WTC11 (cell line): ENCODE measurements at regions of chr4 and their contacts with region 1.

Region 1: DNA sequence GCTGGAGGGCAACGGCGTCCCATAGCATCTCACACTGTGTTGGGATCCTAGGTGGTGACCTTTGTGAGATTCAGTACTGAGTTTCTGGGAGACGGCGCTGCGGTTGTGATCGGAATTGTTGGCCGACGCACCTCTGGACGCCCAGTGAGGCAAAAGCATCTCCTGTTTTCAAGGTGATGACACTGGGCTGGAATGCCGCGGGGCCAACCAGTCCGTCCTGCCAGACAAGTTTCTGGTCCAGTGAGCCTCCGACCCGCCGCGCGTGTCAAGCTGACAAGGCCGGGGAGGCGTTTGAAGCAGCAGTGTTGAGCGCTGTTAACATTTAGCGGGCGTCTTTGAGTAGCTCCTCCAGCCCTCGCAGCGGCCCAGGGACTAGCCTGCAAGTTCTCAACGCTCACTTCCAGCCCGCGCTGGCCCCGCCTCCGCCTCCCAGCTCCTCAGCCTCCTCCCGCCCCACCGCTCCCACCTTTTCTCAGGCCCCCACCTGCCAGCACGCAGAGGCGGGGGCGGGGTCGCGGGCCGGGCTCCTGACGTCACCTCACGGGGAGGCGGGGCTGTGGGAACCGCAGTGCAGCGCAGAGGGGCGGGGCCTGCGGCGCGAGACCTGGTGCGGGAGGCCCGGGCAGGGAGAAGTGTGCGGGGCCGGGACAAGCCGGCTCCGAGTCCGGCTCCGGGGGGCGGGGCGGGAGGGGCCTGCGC is 476 bp upstream of the CDS1 start:
- DNase-seq: peak; percentile 99
- ATAC-seq: peak; percentile 84
- H3K4me3 Mint-ChIP-seq: peak overlapping the region; percentile 65
- H3K27ac Mint-ChIP-seq: peak overlapping the region; percentile 82
- H3K4me1 Mint-ChIP-seq: peaks cover 64% of the 10 kb centered on the region
- H3K27me3 Mint-ChIP-seq: peaks cover 16% of the 10 kb centered on the region
- CTCF ChIP-seq: no peak

Region 2: DNA sequence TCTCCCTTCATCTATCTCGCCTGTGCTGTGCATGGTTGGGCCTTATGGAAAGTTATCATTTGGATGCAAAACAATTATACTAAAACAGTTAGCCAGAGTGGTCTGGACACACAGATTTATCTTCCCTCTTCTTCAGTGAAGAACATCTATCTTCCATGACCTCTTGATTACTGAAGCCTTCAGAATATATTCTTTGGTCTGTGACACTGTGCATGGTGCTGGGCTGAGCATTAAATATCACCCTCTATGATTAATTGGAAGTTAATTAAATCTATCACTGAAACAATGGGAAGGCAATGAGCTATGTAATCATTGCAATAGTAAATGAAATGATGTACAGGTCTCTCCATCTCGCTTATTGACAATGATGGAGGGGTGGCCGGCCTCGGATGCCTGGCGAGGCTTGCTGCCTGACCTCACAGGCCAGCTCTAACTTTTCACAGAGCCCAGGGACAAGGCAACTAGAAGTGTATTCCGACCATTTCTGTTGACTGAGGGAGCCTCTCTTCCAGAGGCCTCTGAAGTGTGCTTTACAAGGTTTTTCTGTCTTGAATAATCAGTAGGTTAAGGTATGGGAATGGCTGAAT is 269.9 kb before region 1 on chr4:
- CTCF ChIA-PET with region 1: no interaction called
- POLR2A ChIA-PET with region 1: no interaction called
- DNase-seq: no peak
- ATAC-seq: no peak
- H3K4me3 Mint-ChIP-seq: no peak overlapping the region
- H3K27ac Mint-ChIP-seq: no peak overlapping the region
- H3K4me1 Mint-ChIP-seq: no peaks in the 10 kb centered on the region
- H3K27me3 Mint-ChIP-seq: peaks cover 2% of the 10 kb centered on the region; the same call in 1 of the 2 replicates
- CTCF ChIP-seq: no peak

Region 3: DNA sequence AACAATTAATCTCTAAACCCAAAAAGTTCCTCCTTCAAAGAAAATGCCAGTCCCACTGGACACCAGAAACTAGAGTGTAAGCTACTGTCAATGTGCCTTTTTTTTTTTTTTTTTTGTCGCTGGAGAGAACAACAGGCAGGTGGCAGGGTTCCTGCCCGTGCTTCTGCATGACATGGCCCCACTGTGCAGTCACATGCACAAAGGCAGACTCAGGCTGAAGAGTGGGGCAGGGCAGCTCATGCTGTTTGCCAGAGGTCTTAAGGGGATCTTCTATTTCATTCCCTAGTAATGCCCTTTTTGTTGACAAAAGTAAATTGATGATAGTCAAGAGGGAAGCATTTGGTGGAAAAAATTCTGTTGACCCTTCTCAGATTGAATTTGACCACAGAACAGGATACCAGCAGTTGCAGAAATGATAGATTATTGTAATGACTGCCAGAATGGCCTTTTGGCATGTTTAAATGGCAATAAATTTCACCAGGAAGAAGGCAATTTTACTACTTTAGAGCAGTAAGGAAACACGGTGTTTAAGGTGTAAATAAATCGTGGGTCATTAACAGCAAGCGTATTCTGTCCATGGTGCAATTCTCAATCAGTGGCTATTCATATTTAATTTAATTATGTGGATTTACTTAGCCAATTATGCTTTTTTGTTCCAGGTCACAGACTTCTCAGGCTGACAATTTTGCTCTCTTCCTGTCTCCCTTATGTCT is 164.3 kb before region 1 on chr4:
- CTCF ChIA-PET with region 1: no interaction called
- POLR2A ChIA-PET with region 1: no interaction called
- DNase-seq: no peak
- ATAC-seq: no peak
- H3K4me3 Mint-ChIP-seq: no peak overlapping the region
- H3K27ac Mint-ChIP-seq: no peak overlapping the region
- H3K4me1 Mint-ChIP-seq: peaks cover 9% of the 10 kb centered on the region; the same call in 1 of the 2 replicates
- H3K27me3 Mint-ChIP-seq: 0 out of 2 replicates have a peak, but pooled peaks cover 2% of the 10 kb centered on the region
- CTCF ChIP-seq: no peak

Region 4: DNA sequence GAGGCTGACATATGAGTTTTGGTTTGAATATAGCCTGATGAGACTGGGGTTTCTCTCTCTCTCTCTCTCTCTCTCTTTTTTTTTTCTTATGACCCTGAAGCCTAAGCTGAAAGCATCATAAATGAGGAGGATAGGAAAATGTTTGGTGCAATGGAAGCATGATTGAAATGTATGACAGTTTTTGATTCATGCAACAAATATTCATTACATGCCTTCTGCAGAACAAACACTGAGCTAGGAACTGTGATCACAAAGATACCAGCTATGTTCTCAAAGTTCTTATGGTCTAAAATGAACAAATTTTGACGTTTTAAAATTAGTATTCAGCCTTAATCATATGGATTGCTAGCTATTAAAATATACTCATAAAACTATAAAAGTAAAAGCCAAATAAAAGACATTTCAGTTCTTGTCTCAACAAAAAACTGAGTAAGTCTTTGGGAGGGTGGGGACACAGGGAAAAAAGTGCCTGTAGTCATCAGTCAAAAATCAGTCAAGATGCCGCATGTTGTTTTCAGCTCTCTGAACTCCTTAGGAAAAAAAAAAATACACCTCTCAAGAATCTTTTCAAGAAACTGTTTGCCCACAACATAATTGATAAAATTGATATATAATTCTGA is 140.6 kb before region 1 on chr4:
- CTCF ChIA-PET with region 1: no interaction called
- POLR2A ChIA-PET with region 1: no interaction called
- DNase-seq: no peak
- ATAC-seq: no peak
- H3K4me3 Mint-ChIP-seq: no peak overlapping the region
- H3K27ac Mint-ChIP-seq: no peak overlapping the region
- H3K4me1 Mint-ChIP-seq: no peaks in the 10 kb centered on the region
- H3K27me3 Mint-ChIP-seq: no peaks in the 10 kb centered on the region; the same call in 1 of the 2 replicates
- CTCF ChIP-seq: no peak

Region 5: GRCh38 chr4:84529169-84529751 is 53.2 kb before region 1 on chr4:
- CTCF ChIA-PET with region 1: interaction called, 10 read pairs
- POLR2A ChIA-PET with region 1: no interaction called
- DNase-seq: no peak
- ATAC-seq: no peak
- H3K4me3 Mint-ChIP-seq: no peak overlapping the region
- H3K27ac Mint-ChIP-seq: no peak overlapping the region
- H3K4me1 Mint-ChIP-seq: peaks cover 7% of the 10 kb centered on the region
- H3K27me3 Mint-ChIP-seq: no peaks in the 10 kb centered on the region
- CTCF ChIP-seq: peak; percentile 63

Region 6: DNA sequence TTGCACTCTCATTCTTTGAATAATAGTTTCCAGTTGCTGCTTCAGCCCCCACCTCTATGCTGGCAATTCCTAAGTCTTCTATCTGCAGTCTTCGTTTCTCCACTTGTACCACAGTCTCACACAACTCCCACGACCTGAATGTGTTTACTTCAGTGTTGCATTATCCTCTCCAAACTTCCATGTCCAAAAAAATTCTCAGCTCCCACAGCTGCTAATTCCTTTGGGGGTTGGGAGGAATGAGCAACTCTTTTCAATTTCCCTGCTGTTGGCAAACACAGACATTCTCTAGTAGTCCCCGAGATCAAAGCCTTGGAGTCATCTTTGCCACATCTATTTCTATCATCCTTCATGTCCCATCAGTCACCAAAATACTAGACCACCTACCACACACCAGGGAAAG is 14.0 kb before region 1 on chr4:
- CTCF ChIA-PET with region 1: interaction called, 39 read pairs
- POLR2A ChIA-PET with region 1: interaction called, 9 read pairs
- DNase-seq: no peak
- ATAC-seq: no peak
- H3K4me3 Mint-ChIP-seq: no peak overlapping the region
- H3K27ac Mint-ChIP-seq: no peak overlapping the region; the same call in 1 of the 2 replicates
- H3K4me1 Mint-ChIP-seq: peaks cover 84% of the 10 kb centered on the region
- H3K27me3 Mint-ChIP-seq: no peaks in the 10 kb centered on the region
- CTCF ChIP-seq: no peak

Region 7: DNA sequence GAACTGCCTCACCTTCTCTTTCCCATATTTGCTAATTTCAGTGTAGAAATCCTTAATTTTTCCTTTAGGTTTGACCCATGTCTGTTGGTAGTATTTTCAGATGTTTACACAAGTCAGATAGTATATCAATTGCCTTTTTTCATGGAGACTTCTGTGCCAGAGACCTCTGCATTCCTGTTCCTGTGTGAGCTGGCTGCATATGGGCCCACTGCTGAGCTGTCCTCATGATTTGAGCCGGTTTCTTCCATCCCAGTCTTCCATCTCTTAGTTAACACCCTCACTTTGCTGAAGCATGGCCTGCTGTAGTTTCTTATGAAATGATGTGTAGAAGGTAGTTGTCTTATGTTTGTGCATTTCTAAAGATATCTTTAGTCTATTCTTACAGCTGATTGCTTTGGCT is 40.5 kb after region 1 on chr4:
- CTCF ChIA-PET with region 1: interaction called, 16 read pairs
- POLR2A ChIA-PET with region 1: no interaction called
- DNase-seq: no peak
- ATAC-seq: peak; percentile 58
- H3K4me3 Mint-ChIP-seq: no peak overlapping the region
- H3K27ac Mint-ChIP-seq: peak overlapping the region; percentile 94
- H3K4me1 Mint-ChIP-seq: peaks cover 12% of the 10 kb centered on the region
- H3K27me3 Mint-ChIP-seq: no peaks in the 10 kb centered on the region
- CTCF ChIP-seq: no peak

Region 8: DNA sequence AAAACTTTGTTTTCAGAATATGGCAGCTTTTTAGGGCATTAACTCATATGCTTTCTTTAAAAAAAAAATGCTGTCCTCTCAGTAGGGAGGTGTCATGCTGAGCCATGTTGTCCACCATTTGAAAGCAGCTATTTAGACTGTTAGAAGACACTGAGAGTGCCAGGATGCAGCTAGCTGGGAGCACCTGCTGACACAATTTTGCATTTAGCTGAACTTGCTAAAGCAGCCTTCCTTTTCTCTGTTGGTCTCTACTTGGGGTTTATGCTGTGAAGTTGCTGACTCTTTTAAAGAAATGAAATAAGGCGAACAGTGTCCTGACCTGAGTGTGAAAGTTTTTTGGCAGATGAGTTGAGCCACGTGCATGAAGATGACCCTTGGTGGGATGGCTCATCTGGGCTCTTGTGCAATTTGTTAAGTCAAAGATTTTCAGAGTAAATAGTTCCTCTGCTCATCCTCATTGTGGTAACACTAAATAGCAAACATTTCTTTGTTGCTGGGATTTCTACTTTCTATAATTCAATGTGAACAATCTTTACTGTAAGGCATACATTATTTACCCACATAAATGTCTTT is 64.9 kb after region 1 on chr4:
- CTCF ChIA-PET with region 1: interaction called, 16 read pairs
- POLR2A ChIA-PET with region 1: interaction called, 7 read pairs
- DNase-seq: peak; percentile 26
- ATAC-seq: peak; percentile 97
- H3K4me3 Mint-ChIP-seq: peak overlapping the region; percentile 24; the same call in 1 of the 2 replicates
- H3K27ac Mint-ChIP-seq: peak overlapping the region; percentile 94
- H3K4me1 Mint-ChIP-seq: peaks cover 54% of the 10 kb centered on the region
- H3K27me3 Mint-ChIP-seq: no peaks in the 10 kb centered on the region
- CTCF ChIP-seq: no peak

Region 9: DNA sequence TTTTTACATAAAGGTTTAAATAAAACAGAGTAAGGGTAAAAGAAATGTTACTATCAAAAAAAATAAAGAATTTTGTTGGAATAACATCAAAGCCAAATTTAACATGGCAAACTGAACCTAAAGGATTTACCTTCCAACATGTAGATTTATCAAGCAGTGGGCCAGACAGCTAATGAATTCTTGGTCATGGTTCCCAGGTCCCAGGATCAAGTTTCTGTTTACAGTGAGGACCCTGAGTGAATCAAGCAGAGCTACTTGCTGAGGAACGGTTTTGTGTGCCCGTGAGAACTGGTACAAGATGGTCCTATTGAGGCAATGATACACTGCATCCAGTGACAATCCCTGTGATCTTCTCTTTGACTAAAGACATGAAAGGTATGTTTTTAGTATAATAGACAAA is 157.6 kb after region 1 on chr4:
- CTCF ChIA-PET with region 1: interaction called, 15 read pairs
- POLR2A ChIA-PET with region 1: no interaction called
- DNase-seq: no peak
- ATAC-seq: no peak
- H3K4me3 Mint-ChIP-seq: no peak overlapping the region
- H3K27ac Mint-ChIP-seq: no peak overlapping the region
- H3K4me1 Mint-ChIP-seq: no peaks in the 10 kb centered on the region
- H3K27me3 Mint-ChIP-seq: no peaks in the 10 kb centered on the region
- CTCF ChIP-seq: no peak